Endothelial cell of umbilical vein (primary cell): ENCODE measurements at regions of chr22 and their contacts with region 1.

Region 1: DNA sequence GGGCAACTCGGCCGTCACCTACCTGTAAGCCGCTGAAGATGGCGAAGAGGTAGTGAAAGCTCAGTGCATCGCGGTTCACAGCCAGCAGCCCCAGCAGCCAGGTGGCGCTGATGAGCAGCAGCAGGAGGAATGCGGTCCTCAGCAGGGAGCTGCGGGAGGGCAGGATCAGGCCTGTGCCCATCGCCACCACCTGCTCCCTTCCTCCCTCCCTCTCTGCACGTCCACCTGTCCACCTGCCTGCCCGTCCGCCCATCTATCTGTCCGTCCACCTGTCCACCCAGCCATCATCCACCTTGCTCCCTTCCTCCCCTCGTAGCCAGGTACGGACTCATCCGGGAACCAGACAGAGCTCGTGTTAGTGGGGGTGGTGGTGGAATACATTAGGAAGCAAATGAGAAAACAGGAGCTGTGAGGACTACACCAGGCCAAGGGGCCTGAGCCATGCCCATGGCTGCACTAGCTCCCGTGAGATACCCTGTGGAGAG is 32.2 kb downstream of the TRMU start:
- DNase-seq: peak; percentile 35
- H3K4me3 ChIP-seq: no peak overlapping the region
- H3K27ac ChIP-seq: no peak overlapping the region
- H3K4me1 ChIP-seq: no peaks in the 10 kb centered on the region
- H3K27me3 ChIP-seq: no peaks in the 10 kb centered on the region
- CTCF ChIP-seq: peak; percentile 79 to 95
- POLR2A ChIP-seq: no peak

Region 2: DNA sequence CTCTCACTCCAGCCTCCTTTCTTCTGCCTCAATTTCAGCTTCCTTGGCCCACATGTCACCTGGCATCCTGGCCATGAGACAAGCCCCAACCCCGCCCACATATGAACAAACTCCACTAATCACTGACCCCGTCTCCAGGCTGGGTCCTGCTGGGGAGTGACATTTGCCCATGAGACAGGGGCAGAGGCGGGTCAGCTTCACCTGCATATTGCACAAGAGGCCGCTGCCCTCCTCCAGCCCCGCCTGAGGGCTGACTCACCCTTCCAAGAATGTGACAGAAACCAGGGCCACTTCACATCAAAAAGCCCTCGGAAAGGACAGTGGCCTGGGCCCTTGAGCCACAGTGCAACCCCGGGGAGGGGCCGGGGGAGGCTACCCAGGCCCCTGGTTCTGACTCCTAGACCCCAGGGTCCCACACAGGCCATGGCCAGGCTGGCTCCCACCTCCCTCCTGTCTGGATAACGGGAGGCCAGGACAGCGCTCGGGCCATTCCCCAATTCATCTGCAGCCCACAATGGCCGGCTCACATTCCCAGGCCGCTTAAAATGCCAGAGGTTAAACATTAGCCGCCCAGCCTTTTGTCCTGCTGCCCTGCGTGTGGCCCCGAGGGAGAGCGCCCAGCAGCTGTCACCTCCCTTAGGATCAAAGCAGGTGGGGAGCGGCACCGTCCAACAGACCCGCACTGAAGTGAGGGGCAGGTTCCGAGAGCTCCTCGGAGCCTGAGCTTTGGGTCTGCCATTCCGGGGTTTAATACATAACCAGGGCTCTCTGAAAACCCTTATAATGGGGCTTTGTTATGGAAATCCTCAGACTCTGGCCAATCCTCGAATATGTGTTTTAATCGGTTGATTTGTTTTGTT is 10.0 kb after region 1 on chr22:
- CTCF ChIA-PET with region 1: interaction called, 10 read pairs
- POLR2A ChIA-PET with region 1: no interaction called
- dilution Hi-C with region 1: no loop called
- intact Hi-C with region 1: no loop called
- DNase-seq: no peak
- H3K4me3 ChIP-seq: no peak overlapping the region
- H3K27ac ChIP-seq: no peak overlapping the region
- H3K4me1 ChIP-seq: peaks cover 6% of the 10 kb centered on the region
- H3K27me3 ChIP-seq: no peaks in the 10 kb centered on the region
- CTCF ChIP-seq: no peak
- POLR2A ChIP-seq: no peak

Region 3: DNA sequence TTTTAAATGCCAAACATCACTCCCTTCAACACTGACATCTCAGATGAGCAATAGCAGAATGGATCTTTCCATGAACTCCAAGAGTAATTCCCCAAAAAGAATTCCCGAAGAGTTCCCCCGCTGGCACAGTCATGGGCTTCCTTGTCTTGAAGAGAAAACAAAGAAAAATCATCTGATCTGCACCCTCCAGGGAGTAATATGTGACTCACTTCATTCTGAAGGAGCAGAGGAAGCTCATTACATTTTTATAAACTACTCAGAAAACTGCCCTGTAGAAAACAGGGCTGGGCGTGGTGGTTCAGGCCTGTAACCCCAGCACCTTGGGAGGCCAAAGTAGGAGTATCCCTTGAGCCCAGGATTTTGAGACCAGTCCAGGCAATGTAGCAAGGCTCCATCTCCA is 134.0 kb after region 1 on chr22:
- CTCF ChIA-PET with region 1: interaction called, 10 read pairs
- POLR2A ChIA-PET with region 1: no interaction called
- dilution Hi-C with region 1: no loop called
- intact Hi-C with region 1: no loop called
- DNase-seq: peak; percentile 77
- H3K4me3 ChIP-seq: no peak overlapping the region
- H3K27ac ChIP-seq: peak overlapping the region; percentile 40
- H3K4me1 ChIP-seq: peaks cover 4% of the 10 kb centered on the region
- H3K27me3 ChIP-seq: no peaks in the 10 kb centered on the region
- CTCF ChIP-seq: no peak
- POLR2A ChIP-seq: no peak

Region 4: GRCh38 chr22:46533434-46533833 is 165.7 kb after region 1 on chr22:
- CTCF ChIA-PET with region 1: interaction called, 418 read pairs
- POLR2A ChIA-PET with region 1: no interaction called
- dilution Hi-C with region 1: no loop called
- intact Hi-C with region 1: no loop called
- DNase-seq: no peak
- H3K4me3 ChIP-seq: no peak overlapping the region
- H3K27ac ChIP-seq: no peak overlapping the region
- H3K4me1 ChIP-seq: peaks cover 5% of the 10 kb centered on the region
- H3K27me3 ChIP-seq: peaks cover 7 to 20% of the 10 kb centered on the region in 2 experiments
- CTCF ChIP-seq: no peak
- POLR2A ChIP-seq: no peak

Region 5: DNA sequence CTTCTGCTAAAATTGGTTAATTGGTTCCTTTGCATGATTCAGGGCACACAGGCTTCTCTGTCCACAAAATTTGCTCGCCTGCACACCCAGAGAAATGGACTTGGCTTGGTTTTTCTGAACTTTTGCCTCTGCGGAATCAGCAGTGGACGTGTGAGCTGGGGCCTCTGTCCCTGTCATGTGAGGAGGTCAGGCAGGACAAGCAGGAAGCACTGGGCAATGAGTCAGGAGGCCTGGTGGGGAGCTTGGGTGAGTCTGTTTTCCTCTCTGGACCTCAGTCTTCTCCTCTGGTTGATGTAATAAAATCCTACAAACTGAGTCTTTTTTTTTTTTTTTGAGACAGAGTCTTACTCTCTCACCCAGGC is 180.1 kb after region 1 on chr22:
- CTCF ChIA-PET with region 1: interaction called, 418 read pairs
- POLR2A ChIA-PET with region 1: no interaction called
- dilution Hi-C with region 1: no loop called
- intact Hi-C with region 1: no loop called
- DNase-seq: peak; percentile 80
- H3K4me3 ChIP-seq: no peak overlapping the region
- H3K27ac ChIP-seq: peak overlapping the region; percentile 19
- H3K4me1 ChIP-seq: peaks cover 20% of the 10 kb centered on the region
- H3K27me3 ChIP-seq: no peaks in the 10 kb centered on the region
- CTCF ChIP-seq: no peak
- POLR2A ChIP-seq: no peak